Thyroid gland (tissue), 4 donors: ENCODE measurements at regions of chr11 and their contacts with region 1.

Region 1: GRCh38 chr11:33065445-33066178 is 26.2 kb downstream of the TCP11L1 start:
- DNase-seq: peak; percentile 63 to 68
- H3K4me3 ChIP-seq: no peak overlapping the region
- H3K27ac ChIP-seq: no peak overlapping the region
- H3K4me1 ChIP-seq: peaks cover 10 to 13% of the 10 kb centered on the region in 2 donors
- H3K27me3 ChIP-seq: no peaks in the 10 kb centered on the region
- CTCF ChIP-seq: peak; percentile 57 to 87 (median 74)
- POLR2A ChIP-seq: no peak

Region 2: GRCh38 chr11:32809313-32809712 is 256.3 kb before region 1 on chr11:
- intact Hi-C with region 1: loop called (anchors 10 kb)
- DNase-seq: peak; percentile 64 to 76
- H3K4me3 ChIP-seq: no peak overlapping the region
- H3K27ac ChIP-seq: no peak overlapping the region
- H3K4me1 ChIP-seq: peaks cover 0 to 4% of the 10 kb centered on the region in 2 donors
- H3K27me3 ChIP-seq: no peaks in the 10 kb centered on the region
- CTCF ChIP-seq: peak in 5 of 6 experiments; percentile 22 to 66 (median 60)
- POLR2A ChIP-seq: no peak

Region 3: GRCh38 chr11:32960553-32961164 is 105.0 kb before region 1 on chr11:
- intact Hi-C with region 1: loop called (anchors 5 kb)
- DNase-seq: no peak
- H3K4me3 ChIP-seq: no peak overlapping the region
- H3K27ac ChIP-seq: no peak overlapping the region
- H3K4me1 ChIP-seq: no peaks in the 10 kb centered on the region
- H3K27me3 ChIP-seq: no peaks in the 10 kb centered on the region
- CTCF ChIP-seq: peak; percentile 18 to 64 (median 60)
- POLR2A ChIP-seq: no peak